GM13976 (cell line): ENCODE measurements at regions of chr12 and their contacts with region 1.

Region 1: GRCh38 chr12:14384783-14385638 is 19.5 kb downstream of the ATF7IP start:
- DNase-seq: peak; percentile 65
- CTCF ChIP-seq: no peak

Region 2: GRCh38 chr12:14479004-14479403 is 94.0 kb after region 1 on chr12:
- in situ Hi-C with region 1: no loop called
- DNase-seq: no peak
- CTCF ChIP-seq: no peak

Region 3: GRCh38 chr12:14701809-14702568 is 317.0 kb after region 1 on chr12:
- in situ Hi-C with region 1: no loop called
- DNase-seq: no peak
- CTCF ChIP-seq: no peak

Region 4: DNA sequence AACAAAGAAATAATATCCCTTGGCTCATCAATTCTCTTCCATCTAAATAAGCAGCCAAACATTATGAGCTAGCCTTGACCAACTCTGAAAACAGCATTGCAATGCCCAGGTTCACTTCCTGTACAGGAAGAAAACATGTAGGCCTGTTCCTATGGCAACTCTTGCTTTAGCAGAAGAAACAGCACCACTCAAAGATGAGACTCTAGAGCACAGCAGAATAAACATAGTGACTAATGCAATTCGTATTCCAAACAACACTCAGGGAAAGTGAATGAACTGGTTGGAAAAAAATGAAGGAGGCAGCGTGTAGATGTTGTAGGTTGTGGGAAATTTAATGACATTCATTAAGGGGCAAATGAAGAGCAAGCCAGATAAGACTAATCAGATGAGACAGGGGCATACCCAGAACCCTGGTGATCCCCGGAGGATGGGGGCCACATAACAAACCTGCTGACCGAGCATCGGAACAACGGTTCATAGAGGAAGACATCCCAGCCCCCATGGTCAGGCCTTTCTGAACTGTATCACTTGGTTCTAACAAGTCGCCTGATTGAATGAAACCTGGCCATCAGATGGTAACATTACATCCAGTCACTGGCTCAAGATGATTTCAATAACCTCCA is 567.4 kb after region 1 on chr12:
- in situ Hi-C with region 1: loop called (anchors 25 kb)
- DNase-seq: peak; percentile 21
- CTCF ChIP-seq: no peak